ENCODE measurements at regions of chr10 and their contacts with region 1.

Region 1: DNA sequence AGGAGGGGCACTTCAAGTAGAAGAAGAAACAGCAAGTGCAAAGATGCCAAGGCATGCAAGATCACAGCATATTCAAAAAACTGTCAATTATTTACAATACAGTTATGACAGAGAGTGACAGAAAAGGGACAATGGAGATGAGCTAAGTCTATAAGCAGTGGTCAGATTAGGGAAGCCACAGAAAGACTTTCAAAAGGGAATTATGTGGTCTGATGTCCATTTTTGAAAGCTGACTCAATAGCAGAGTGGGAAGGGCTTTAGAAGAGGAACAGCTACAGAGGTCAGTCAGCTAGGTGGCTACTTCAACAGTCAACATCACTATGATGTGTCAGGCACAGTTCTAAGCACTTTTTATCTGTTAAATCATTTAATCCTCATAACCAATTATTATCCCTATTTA is 45.2 kb upstream of the SPOCK2 start:
- DNase-seq: no peak
- ATAC-seq: no peak

Region 2: DNA sequence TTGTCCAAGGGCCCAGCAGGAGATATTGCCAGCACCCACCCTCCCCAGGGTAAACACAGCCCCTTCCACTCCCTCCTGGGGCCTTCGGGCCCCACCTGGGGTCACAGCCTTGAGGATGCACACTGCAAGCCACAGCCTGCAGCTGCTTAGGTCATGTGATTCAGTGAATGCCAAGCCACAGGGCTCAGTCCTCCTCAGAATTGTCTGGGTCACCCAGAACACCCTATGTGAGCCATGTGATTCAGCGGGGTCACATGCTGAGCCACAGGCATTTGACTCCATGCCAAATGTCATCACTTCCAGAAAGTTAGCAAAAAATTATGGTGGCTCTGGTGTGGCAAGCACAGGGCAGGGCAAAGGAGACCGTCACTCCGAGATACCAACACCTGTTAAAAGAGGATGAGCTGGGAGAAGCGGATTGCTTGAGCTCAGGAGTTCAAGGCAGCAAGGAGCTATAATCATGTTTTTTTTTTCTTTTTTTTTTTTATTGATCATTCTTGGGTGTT is 265.3 kb before region 1 on chr10:
- intact Hi-C with region 1: no loop called
- DNase-seq: peak; percentile 63
- ATAC-seq: peak; percentile 73

Region 3: DNA sequence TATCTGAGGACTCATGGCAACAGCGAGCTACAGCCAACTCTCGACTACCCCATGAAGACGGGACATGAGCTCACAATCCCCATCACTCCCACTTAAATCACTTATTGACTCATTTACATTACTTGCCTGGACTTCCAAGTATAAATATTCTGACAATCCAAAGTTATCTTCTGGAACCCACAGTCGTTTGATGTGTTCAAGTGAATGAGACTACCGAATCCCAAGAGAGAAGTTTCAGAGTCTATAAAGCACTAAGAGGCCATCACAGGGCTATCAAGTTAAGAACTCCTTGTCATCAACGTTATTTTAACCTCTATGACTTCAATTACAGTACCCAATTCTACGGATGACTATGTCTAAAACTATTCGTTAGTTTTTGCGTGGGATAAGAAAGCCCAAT is 70.8 kb after region 1 on chr10:
- intact Hi-C with region 1: loop called (anchors 10 kb)
- DNase-seq: no peak
- ATAC-seq: no peak